ENCODE measurements at regions of chr2 and their contacts with region 1.

Region 1: GRCh38 chr2:207478572-207478971 is 51.2 kb upstream of the CREB1 start:
- DNase-seq: no peak
- H3K4me3 ChIP-seq: no peak overlapping the region
- H3K4me3 Mint-ChIP-seq: peak overlapping the region; percentile 3
- H3K27ac Mint-ChIP-seq: peak overlapping the region; percentile 66
- H3K4me1 ChIP-seq: peaks cover 49% of the 10 kb centered on the region
- H3K4me1 Mint-ChIP-seq: peaks cover 42% of the 10 kb centered on the region
- H3K27me3 ChIP-seq: no peaks in the 10 kb centered on the region
- H3K27me3 Mint-ChIP-seq: no peaks in the 10 kb centered on the region
- CTCF ChIP-seq: no peak

Region 2: DNA sequence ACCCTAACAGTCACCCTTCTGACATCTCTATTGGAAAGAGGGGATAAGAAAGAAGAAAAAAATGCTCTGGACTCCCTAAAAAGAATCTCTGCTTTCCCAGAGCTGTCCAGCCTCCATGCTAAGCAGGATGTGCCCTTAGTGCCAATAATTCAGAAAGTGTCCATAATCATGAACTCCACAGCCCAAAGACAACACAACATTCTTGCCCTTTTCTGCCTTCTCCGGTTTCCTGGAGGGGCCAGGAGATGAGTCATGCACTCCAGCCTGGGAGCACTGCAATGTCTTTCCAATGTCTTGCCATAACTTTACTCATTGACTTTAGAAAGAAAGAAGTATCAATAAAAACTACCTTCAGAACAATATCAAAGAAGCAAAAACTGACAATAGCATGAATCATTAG is 356.8 kb before region 1 on chr2:
- CTCF ChIA-PET with region 1: no interaction called
- POLR2A ChIA-PET with region 1: no interaction called
- intact Hi-C with region 1: no loop called
- DNase-seq: no peak
- H3K4me3 ChIP-seq: no peak overlapping the region
- H3K4me3 Mint-ChIP-seq: no peak overlapping the region
- H3K27ac Mint-ChIP-seq: no peak overlapping the region
- H3K4me1 ChIP-seq: no peaks in the 10 kb centered on the region
- H3K4me1 Mint-ChIP-seq: no peaks in the 10 kb centered on the region
- H3K27me3 ChIP-seq: no peaks in the 10 kb centered on the region
- H3K27me3 Mint-ChIP-seq: peaks cover 5% of the 10 kb centered on the region
- CTCF ChIP-seq: no peak

Region 3: GRCh38 chr2:207498427-207498826 is 19.9 kb after region 1 on chr2:
- CTCF ChIA-PET with region 1: interaction called, 3 read pairs
- POLR2A ChIA-PET with region 1: no interaction called
- intact Hi-C with region 1: loop called (anchors 1 kb)
- DNase-seq: no peak
- H3K4me3 ChIP-seq: no peak overlapping the region
- H3K4me3 Mint-ChIP-seq: no peak overlapping the region
- H3K27ac Mint-ChIP-seq: no peak overlapping the region
- H3K4me1 ChIP-seq: 0 out of 2 replicates have a peak, but pooled peaks cover 5% of the 10 kb centered on the region
- H3K4me1 Mint-ChIP-seq: no peaks in the 10 kb centered on the region
- H3K27me3 ChIP-seq: no peaks in the 10 kb centered on the region
- H3K27me3 Mint-ChIP-seq: no peaks in the 10 kb centered on the region
- CTCF ChIP-seq: no peak

Region 4: GRCh38 chr2:207529330-207530159 is 51.0 kb after region 1 on chr2 and contains the start of gene CREB1:
- CTCF ChIA-PET with region 1: no interaction called
- POLR2A ChIA-PET with region 1: no interaction called
- intact Hi-C with region 1: loop called (anchors 1 kb)
- DNase-seq: peak; percentile 98 to 100
- H3K4me3 ChIP-seq: peak within 1 kb of the TSS; percentile 89
- H3K4me3 Mint-ChIP-seq: peak within 1 kb of the TSS; percentile 78
- H3K27ac Mint-ChIP-seq: peak within 1 kb of the TSS; percentile 97
- H3K4me1 ChIP-seq: peaks cover 35% of the 10 kb centered on the region
- H3K4me1 Mint-ChIP-seq: peaks cover 21% of the 10 kb centered on the region
- H3K27me3 ChIP-seq: no peaks in the 10 kb centered on the region
- H3K27me3 Mint-ChIP-seq: no peaks in the 10 kb centered on the region
- CTCF ChIP-seq: no peak
- total RNA-seq, gene CREB1: 49.7 and 59.0 TPM in 2 replicates

Region 5: GRCh38 chr2:207558106-207558505 is 79.5 kb after region 1 on chr2:
- CTCF ChIA-PET with region 1: no interaction called
- POLR2A ChIA-PET with region 1: no interaction called
- intact Hi-C with region 1: loop called (anchors 2 kb)
- DNase-seq: no peak
- H3K4me3 ChIP-seq: no peak overlapping the region
- H3K4me3 Mint-ChIP-seq: no peak overlapping the region
- H3K27ac Mint-ChIP-seq: peak overlapping the region; percentile 34
- H3K4me1 ChIP-seq: peaks cover 22% of the 10 kb centered on the region
- H3K4me1 Mint-ChIP-seq: peaks cover 29% of the 10 kb centered on the region
- H3K27me3 ChIP-seq: no peaks in the 10 kb centered on the region
- H3K27me3 Mint-ChIP-seq: no peaks in the 10 kb centered on the region
- CTCF ChIP-seq: no peak

Measured in Caco-2 (cell line).